ENCODE measurements at regions of chr17 and their contacts with region 1.

Region 1: DNA sequence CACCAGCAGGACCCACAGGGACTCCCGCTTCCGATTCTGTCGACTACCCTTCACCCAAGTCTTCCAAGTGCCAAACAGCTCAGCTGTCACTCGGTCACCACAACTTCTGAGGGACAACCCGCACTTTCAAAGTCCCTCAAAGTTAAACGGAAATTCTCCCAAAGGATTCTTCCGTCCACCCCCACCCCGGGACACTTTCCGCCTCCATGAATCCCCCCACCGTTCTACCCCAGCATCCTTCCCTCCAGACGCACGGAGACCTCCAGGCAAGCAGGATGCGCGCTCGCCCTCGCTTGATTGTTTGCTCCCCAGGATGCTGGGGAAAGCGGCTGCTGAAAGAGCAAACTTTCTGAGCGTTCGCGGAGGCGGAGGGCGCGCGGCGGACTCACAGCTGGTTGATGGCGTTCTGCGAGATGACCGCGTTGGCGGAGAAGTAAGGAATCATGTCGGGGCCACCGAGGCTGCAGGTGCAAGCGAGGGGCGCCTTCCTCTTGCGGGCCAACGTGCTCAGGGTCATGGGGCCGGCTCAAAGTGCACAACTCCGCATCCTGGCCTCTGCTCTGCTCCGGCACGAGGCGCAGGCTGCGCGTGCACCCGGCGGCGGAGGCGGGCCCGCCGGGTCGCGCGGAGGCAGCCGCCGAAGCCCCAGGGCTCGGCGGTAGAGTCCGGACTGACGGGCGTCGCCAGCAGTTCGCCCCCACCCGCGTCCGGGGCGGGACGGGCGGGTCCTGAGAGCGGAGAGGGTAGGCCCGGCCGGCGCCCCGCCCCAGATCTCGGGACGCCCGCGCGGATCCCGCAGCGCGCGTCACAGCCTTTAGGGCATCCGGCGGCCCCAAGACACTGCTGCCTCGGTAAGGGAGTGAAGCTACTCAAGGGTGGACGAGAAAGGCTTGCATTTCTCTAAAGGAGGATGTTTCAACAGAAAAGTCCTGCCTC is 138.3 kb upstream of the CORO6 start:
- DNase-seq: peak; percentile 80 to 95 (median 92)
- ATAC-seq: peak; percentile 84
- H3K4me3 ChIP-seq: peak overlapping the region; percentile 84 to 88
- H3K4me3 Mint-ChIP-seq: peak overlapping the region; percentile 96
- H3K27ac ChIP-seq: peak overlapping the region; percentile 75 to 81
- H3K27ac Mint-ChIP-seq: peak overlapping the region; percentile 93
- H3K4me1 ChIP-seq: peaks cover 42% of the 10 kb centered on the region
- H3K4me1 Mint-ChIP-seq: peaks cover 41% of the 10 kb centered on the region
- H3K27me3 ChIP-seq: no peaks in the 10 kb centered on the region
- H3K27me3 Mint-ChIP-seq: no peaks in the 10 kb centered on the region
- CTCF ChIP-seq: no peak

Region 2: GRCh38 chr17:29568331-29569244 is 192.4 kb before region 1 on chr17 and contains the start of gene TP53I13:
- CTCF ChIA-PET with region 1: no interaction called
- POLR2A ChIA-PET with region 1: interaction called, 5 read pairs
- intact Hi-C with region 1: loop called (anchors 5 kb)
- DNase-seq: peak; percentile 71 to 95 (median 91)
- ATAC-seq: peak; percentile 57
- H3K4me3 ChIP-seq: peak within 1 kb of the TSS; percentile 66 to 94
- H3K4me3 Mint-ChIP-seq: peak within 1 kb of the TSS; percentile 94
- H3K27ac ChIP-seq: peak within 1 kb of the TSS; percentile 53 to 78
- H3K27ac Mint-ChIP-seq: peak within 1 kb of the TSS; percentile 86
- H3K4me1 ChIP-seq: peaks cover 30% of the 10 kb centered on the region
- H3K4me1 Mint-ChIP-seq: peaks cover 41% of the 10 kb centered on the region
- H3K27me3 ChIP-seq: no peaks in the 10 kb centered on the region
- H3K27me3 Mint-ChIP-seq: no peaks in the 10 kb centered on the region
- CTCF ChIP-seq: no peak
- total RNA-seq, gene TP53I13: 50.2 to 54.1 TPM

Region 3: DNA sequence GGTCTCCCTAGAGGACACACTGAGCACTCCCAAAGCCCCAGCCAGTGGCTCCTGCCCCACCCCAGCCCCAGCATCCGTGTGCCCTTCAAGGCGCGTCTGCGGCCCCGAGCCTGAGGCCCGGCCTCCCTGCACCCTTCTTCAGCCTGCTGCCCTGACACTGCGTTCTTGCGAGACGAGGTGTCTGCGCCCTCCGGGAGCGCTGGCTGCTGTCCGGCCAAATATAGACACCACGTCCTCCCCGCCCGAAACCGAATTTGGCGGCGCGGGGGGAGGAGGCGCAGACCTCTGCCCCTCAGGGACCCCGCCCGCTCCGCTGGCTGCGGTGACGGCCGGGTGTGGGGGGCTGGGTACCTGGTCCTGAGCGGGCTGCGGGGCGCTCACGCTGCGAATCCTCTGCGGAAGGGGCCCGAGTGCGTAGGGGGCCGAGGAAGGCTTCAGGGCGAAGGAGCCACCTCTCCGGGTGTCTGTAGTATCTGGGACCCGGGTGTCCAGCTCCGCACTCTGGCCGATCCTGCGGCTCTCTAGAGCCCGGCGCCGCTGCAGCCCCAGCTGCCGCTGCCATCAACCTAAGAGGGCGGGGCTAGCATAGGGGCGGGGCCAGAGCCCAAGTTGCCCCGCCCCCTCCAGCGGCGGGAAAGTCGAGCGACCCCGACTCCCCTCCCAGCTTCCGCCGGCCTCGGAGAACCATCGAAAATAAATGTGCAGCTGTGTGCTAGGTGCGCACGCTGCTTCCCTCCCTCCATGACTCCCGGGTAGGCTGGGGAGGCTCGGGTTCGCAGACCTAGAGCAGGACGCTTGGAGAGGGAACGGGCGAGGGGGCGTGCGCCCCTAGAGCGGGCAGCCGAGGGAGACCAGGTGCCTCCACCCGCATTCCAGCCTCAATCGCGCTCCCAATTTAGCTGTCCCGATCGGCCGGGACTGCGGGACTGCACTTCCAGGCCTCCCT is 138.4 kb before region 1 on chr17 and contains the start of gene CORO6:
- CTCF ChIA-PET with region 1: interaction called, 9 read pairs
- POLR2A ChIA-PET with region 1: interaction called, 23 read pairs
- intact Hi-C with region 1: loop called in 1 of 2 experiments (anchors 1 kb)
- DNase-seq: peak; percentile 41 to 79 (median 69)
- ATAC-seq: peak; percentile 75
- H3K4me3 ChIP-seq: peak within 1 kb of the TSS; percentile 58 to 72
- H3K4me3 Mint-ChIP-seq: peak within 1 kb of the TSS; percentile 83
- H3K27ac ChIP-seq: no peak within 1 kb of the TSS
- H3K27ac Mint-ChIP-seq: peak within 1 kb of the TSS; percentile 45
- H3K4me1 ChIP-seq: peaks cover 28% of the 10 kb centered on the region
- H3K4me1 Mint-ChIP-seq: peaks cover 28% of the 10 kb centered on the region
- H3K27me3 ChIP-seq: no peaks in the 10 kb centered on the region
- H3K27me3 Mint-ChIP-seq: no peaks in the 10 kb centered on the region
- CTCF ChIP-seq: no peak
- total RNA-seq, gene CORO6: 1.2 to 1.7 TPM

Region 4: GRCh38 chr17:29705386-29705785 is 55.6 kb before region 1 on chr17:
- CTCF ChIA-PET with region 1: interaction called, 6 read pairs
- POLR2A ChIA-PET with region 1: interaction called, 32 read pairs
- intact Hi-C with region 1: loop called (anchors 1 kb)
- DNase-seq: peak in 2 of 9 experiments; percentile 29 to 58
- ATAC-seq: peak; percentile 16
- H3K4me3 ChIP-seq: peak overlapping the region; percentile 1 to 9
- H3K4me3 Mint-ChIP-seq: peak overlapping the region; percentile 66
- H3K27ac ChIP-seq: peak overlapping the region; percentile 62 to 91
- H3K27ac Mint-ChIP-seq: peak overlapping the region; percentile 99
- H3K4me1 ChIP-seq: peaks cover 37% of the 10 kb centered on the region
- H3K4me1 Mint-ChIP-seq: peaks cover 58% of the 10 kb centered on the region
- H3K27me3 ChIP-seq: no peaks in the 10 kb centered on the region
- H3K27me3 Mint-ChIP-seq: no peaks in the 10 kb centered on the region
- CTCF ChIP-seq: no peak

Region 5: GRCh38 chr17:29740017-29740416 is 21.0 kb before region 1 on chr17:
- CTCF ChIA-PET with region 1: no interaction called
- POLR2A ChIA-PET with region 1: interaction called, 4 read pairs
- intact Hi-C with region 1: loop called in 1 of 2 experiments (anchors 2 kb)
- DNase-seq: peak in 1 of 9 experiments; percentile 30
- ATAC-seq: peak; percentile 22
- H3K4me3 ChIP-seq: no peak overlapping the region
- H3K4me3 Mint-ChIP-seq: peak overlapping the region; percentile 15
- H3K27ac ChIP-seq: peak overlapping the region in 1 of 2 experiments; percentile 54
- H3K27ac Mint-ChIP-seq: peak overlapping the region; percentile 87
- H3K4me1 ChIP-seq: peaks cover 30% of the 10 kb centered on the region
- H3K4me1 Mint-ChIP-seq: peaks cover 57% of the 10 kb centered on the region
- H3K27me3 ChIP-seq: no peaks in the 10 kb centered on the region
- H3K27me3 Mint-ChIP-seq: no peaks in the 10 kb centered on the region
- CTCF ChIP-seq: no peak

Measured in CD8-positive, alpha-beta T cell (primary cell).